ENCODE measurements at regions of chr5 and their contacts with region 1.

Region 1: GRCh38 chr5:1641560-1642166 is 117.9 kb upstream of the LPCAT1 start:
- DNase-seq: peak; percentile 43 to 76 (median 75)
- H3K4me3 ChIP-seq: no peak overlapping the region
- H3K4me3 Mint-ChIP-seq: peak overlapping the region in 2 of 8 donors; percentile 26 to 37
- H3K27ac ChIP-seq: no peak overlapping the region
- H3K27ac Mint-ChIP-seq: peak overlapping the region in 1 of 7 donors; percentile 47
- H3K4me1 ChIP-seq: peaks cover 6% of the 10 kb centered on the region
- H3K4me1 Mint-ChIP-seq: peaks cover 6 to 21% (median 12%) of the 10 kb centered on the region in 4 donors
- H3K27me3 ChIP-seq: peaks cover 24% of the 10 kb centered on the region
- H3K27me3 Mint-ChIP-seq: peaks cover 17 to 21% of the 10 kb centered on the region in 2 donors

Region 2: DNA sequence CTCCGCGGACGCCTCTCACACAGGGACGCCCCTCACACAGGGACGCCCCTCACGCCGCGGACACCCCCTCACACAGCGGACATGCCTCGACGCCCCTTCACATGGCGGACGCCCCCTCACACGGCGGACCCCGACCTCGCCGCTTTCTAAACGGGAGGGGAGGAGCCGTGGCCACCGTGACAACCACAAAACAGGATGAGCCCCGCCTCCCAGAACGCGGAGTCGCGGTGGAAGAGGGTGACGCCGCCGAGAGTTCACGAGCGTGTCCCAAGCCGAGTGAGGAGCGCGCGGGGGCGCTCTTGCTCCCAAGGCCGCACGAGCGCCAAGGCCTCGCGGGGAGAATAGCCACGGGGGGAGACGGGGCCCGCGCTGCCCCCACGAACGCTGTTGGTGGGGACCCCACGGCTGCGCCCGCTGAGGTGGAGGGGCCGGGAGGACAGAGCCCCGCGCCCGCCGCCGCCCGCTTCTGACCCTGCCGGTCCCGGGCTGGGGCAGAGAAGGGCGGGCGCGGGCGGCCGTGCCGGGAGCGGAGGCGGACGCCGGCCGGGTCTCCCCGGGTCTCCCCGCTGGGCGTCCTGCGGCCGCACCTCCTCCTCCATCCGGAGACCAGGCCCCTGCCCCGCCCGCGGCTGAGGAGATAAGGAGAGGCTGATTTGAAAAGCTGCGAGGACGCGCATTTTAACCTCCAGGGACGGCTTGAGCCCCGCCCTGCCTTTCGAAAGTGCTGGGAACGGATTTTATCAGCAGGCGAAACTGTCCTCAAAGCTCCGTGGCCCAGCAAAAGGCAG is 637.0 kb before region 1 on chr5:
- CTCF ChIA-PET with region 1: no interaction called
- POLR2A ChIA-PET with region 1: no interaction called
- intact Hi-C with region 1: loop called (anchors 10 kb)
- DNase-seq: peak in 4 of 5 donors; percentile 43 to 52 (median 47)
- H3K4me3 ChIP-seq: peak overlapping the region in 1 of 2 donors; percentile 38
- H3K4me3 Mint-ChIP-seq: peak overlapping the region; percentile 69 to 83 (median 76)
- H3K27ac ChIP-seq: no peak overlapping the region
- H3K27ac Mint-ChIP-seq: peak overlapping the region in 2 of 7 donors; percentile 36 to 56
- H3K4me1 ChIP-seq: peaks cover 24% of the 10 kb centered on the region
- H3K4me1 Mint-ChIP-seq: peaks cover 10 to 37% (median 24%) of the 10 kb centered on the region in 4 donors
- H3K27me3 ChIP-seq: peaks cover 15% of the 10 kb centered on the region
- H3K27me3 Mint-ChIP-seq: peaks cover 12 to 29% of the 10 kb centered on the region in 2 donors

Region 3: DNA sequence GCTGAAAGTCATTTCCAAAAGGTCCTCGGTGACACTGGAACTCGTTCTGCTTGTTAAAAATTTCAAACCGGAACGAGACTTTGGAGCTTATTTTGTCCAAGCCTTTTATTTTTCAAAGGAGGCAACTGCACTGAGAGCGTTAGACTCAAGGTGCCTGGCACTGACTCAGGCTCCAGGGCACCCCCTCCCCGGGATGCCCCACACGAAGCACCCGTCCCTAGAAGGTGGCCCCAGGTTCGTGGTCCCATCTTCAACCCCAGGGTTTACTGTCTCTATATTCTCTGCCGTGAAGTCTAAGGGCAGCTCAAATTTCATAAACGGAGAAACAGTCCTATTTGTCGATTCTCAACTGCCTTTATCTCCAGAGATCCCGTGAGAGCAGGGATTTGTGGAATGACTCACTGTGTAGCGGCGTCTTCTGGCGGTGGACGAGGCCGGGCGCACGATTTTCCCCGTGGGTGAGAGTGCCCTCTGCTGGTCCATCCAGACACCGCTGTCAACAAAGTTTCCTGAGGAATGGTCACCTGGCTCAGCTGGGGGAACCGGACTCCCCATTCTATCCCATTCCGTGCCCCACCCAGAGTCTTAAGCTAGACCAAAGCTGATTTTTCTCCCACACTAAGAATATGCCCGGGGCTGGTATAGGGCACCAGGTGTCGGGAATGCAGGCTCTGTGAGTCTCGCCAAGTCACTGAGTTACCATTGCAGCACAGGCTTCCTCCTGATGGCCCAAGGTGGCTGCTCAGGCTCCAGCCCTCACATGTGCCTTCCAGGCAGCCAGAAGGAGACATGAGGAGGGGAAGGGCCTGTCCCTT is 467.3 kb before region 1 on chr5:
- CTCF ChIA-PET with region 1: interaction called, 57 read pairs
- POLR2A ChIA-PET with region 1: no interaction called
- intact Hi-C with region 1: no loop called
- DNase-seq: peak in 4 of 5 donors; percentile 15 to 23 (median 20)
- H3K4me3 ChIP-seq: no peak overlapping the region
- H3K4me3 Mint-ChIP-seq: no peak overlapping the region
- H3K27ac ChIP-seq: no peak overlapping the region
- H3K27ac Mint-ChIP-seq: no peak overlapping the region
- H3K4me1 ChIP-seq: no peaks in the 10 kb centered on the region
- H3K4me1 Mint-ChIP-seq: peaks cover 0 to 8% (median 5%) of the 10 kb centered on the region in 4 donors
- H3K27me3 ChIP-seq: no peaks in the 10 kb centered on the region
- H3K27me3 Mint-ChIP-seq: peaks cover 0 to 3% of the 10 kb centered on the region in 2 donors

Region 4: GRCh38 chr5:1380011-1380817 is 261.4 kb before region 1 on chr5:
- CTCF ChIA-PET with region 1: interaction called, 38 read pairs
- POLR2A ChIA-PET with region 1: interaction called, 13 read pairs
- intact Hi-C with region 1: loop called (anchors 1 kb)
- DNase-seq: peak; percentile 58 to 72 (median 61)
- H3K4me3 ChIP-seq: no peak overlapping the region
- H3K4me3 Mint-ChIP-seq: peak overlapping the region; percentile 70 to 83 (median 79)
- H3K27ac ChIP-seq: no peak overlapping the region
- H3K27ac Mint-ChIP-seq: peak overlapping the region in 6 of 7 donors; percentile 53 to 87 (median 68)
- H3K4me1 ChIP-seq: peaks cover 10% of the 10 kb centered on the region
- H3K4me1 Mint-ChIP-seq: peaks cover 6 to 23% (median 13%) of the 10 kb centered on the region in 4 donors
- H3K27me3 ChIP-seq: no peaks in the 10 kb centered on the region
- H3K27me3 Mint-ChIP-seq: peaks cover 0 to 1% of the 10 kb centered on the region in 2 donors

Region 5: DNA sequence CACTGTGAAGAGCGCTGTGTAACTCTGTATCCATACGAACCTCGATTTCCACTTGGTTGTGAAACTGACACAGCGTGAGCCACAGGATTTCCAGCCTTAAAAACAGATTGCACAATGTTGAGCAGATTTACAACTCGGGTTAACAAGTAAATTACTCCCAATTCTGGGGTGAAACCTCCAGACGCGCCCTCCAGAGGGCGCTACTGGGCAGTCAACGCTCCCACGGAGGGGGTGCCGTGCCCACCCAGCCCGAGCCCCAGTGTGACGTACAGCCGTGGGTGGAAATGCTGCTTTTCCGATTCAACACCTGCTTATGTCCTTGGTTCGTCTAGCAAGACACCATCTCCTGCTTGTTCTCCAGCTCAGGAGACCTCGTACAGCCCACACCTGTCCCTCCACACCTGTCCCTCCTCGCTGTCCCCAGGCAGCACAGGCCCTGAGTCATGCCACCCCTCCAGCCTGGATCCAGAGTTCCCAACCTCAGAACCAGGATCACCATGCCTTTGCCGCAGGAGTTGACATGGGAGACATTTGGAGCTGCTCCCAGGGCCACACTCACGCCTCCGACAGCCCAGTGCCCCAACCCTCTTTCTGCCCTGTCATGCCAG is 162.0 kb before region 1 on chr5:
- CTCF ChIA-PET with region 1: interaction called, 23 read pairs
- POLR2A ChIA-PET with region 1: no interaction called
- intact Hi-C with region 1: loop called (anchors 1 kb)
- DNase-seq: peak in 2 of 5 donors; percentile 18 to 41
- H3K4me3 ChIP-seq: no peak overlapping the region
- H3K4me3 Mint-ChIP-seq: no peak overlapping the region
- H3K27ac ChIP-seq: no peak overlapping the region
- H3K27ac Mint-ChIP-seq: peak overlapping the region in 2 of 7 donors; percentile 17 to 35
- H3K4me1 ChIP-seq: no peaks in the 10 kb centered on the region
- H3K4me1 Mint-ChIP-seq: peaks cover 0 to 10% (median 5%) of the 10 kb centered on the region in 4 donors
- H3K27me3 ChIP-seq: no peaks in the 10 kb centered on the region
- H3K27me3 Mint-ChIP-seq: no peaks in the 10 kb centered on the region

Region 6: GRCh38 chr5:1594357-1595106 is 47.1 kb before region 1 on chr5:
- CTCF ChIA-PET with region 1: interaction called, 3 read pairs
- POLR2A ChIA-PET with region 1: no interaction called
- intact Hi-C with region 1: loop called (anchors 1 kb)
- DNase-seq: peak; percentile 3 to 48 (median 39)
- H3K4me3 ChIP-seq: peak overlapping the region in 1 of 2 donors; percentile 22
- H3K4me3 Mint-ChIP-seq: peak overlapping the region in 7 of 8 donors; percentile 46 to 81 (median 68)
- H3K27ac ChIP-seq: no peak overlapping the region
- H3K27ac Mint-ChIP-seq: peak overlapping the region in 1 of 7 donors; percentile 51
- H3K4me1 ChIP-seq: no peaks in the 10 kb centered on the region
- H3K4me1 Mint-ChIP-seq: peaks cover 0 to 5% (median 3%) of the 10 kb centered on the region in 4 donors
- H3K27me3 ChIP-seq: no peaks in the 10 kb centered on the region
- H3K27me3 Mint-ChIP-seq: no peaks in the 10 kb centered on the region

Measured in CD4-positive, alpha-beta memory T cell (primary cell).